ENCODE measurements at regions of chrX and their contacts with region 1.

Region 1: DNA sequence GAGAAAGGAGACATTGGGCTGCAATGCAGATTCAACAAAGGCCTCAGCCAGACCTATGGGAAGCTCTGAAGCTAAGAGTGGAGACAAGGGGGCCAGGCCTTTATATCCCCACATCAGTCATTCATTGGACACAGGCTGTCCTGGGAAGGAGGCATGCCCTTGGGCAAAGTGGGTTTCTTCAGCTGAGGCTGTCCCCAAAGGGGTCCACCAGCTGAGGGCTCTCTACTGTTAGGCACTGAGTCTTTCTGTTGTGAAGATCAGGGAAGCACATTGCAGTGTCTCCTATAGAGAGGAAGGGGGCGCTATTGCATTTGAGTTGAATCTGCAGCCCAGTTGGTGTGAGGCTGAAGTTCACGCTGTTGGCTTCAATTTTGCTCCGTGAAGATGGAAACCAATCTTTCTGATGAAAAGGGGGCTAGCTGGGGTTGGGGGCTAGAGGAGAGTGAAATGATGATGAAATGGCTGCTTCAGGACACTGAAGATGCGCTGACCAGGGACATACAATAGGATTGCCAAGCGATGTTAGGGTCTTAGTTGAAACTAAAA is 48.0 kb downstream of the SLC25A5 start:
- DNase-seq: peak; percentile 25
- H3K4me3 Mint-ChIP-seq: no peak overlapping the region
- H3K27ac Mint-ChIP-seq: peak overlapping the region; percentile 2
- H3K4me1 Mint-ChIP-seq: peaks cover 8% of the 10 kb centered on the region
- H3K27me3 Mint-ChIP-seq: peaks cover 2% of the 10 kb centered on the region

Region 2: DNA sequence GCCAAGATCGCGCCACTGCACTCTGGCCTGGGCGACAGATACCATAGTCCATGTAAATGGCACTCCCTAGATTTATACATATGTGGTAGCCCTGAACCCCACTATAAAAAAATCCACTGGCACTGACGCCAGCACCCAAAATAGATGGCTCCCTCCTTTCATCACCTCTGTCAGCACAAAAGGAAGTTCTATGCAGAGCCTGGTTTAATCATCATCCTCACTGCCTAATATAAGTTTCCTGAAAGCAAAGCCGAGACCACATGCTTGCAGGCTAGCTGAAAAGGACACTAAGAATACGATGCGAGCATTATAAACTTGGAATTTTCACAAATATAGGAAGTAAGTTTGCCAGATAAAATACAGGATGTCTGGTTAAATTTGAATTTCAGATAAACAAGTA is 1048.1 kb before region 1 on chrX:
- intact Hi-C with region 1: no loop called
- DNase-seq: no peak
- H3K4me3 Mint-ChIP-seq: no peak overlapping the region
- H3K27ac Mint-ChIP-seq: no peak overlapping the region
- H3K4me1 Mint-ChIP-seq: no peaks in the 10 kb centered on the region
- H3K27me3 Mint-ChIP-seq: peaks cover 1% of the 10 kb centered on the region

Region 3: DNA sequence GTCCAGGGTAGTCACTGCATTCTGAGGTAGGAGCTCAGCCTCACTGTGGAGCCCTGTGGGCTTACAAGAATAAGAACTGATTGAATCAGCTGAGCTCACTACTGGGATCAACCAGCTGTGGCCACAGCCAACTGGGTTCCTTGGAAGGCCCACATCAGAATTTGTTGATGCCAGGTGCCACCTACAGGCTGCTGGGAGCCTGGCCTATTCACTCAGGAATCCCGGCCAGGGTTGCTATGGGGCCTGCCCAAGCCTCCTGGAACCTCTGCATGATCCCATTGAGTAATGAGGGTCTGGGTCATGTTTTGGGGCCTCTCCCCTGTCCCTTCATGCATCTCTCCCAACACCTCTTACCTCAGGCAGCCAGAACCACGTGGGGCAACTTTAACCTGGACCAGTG is 334.7 kb before region 1 on chrX:
- intact Hi-C with region 1: no loop called
- DNase-seq: no peak
- H3K4me3 Mint-ChIP-seq: no peak overlapping the region
- H3K27ac Mint-ChIP-seq: no peak overlapping the region
- H3K4me1 Mint-ChIP-seq: no peaks in the 10 kb centered on the region
- H3K27me3 Mint-ChIP-seq: peaks cover 2% of the 10 kb centered on the region

Region 4: GRCh38 chrX:119273420-119274192 is 242.6 kb before region 1 on chrX:
- intact Hi-C with region 1: no loop called
- DNase-seq: peak; percentile 36
- H3K4me3 Mint-ChIP-seq: peak overlapping the region; percentile 59
- H3K27ac Mint-ChIP-seq: no peak overlapping the region
- H3K4me1 Mint-ChIP-seq: peaks cover 8% of the 10 kb centered on the region
- H3K27me3 Mint-ChIP-seq: peaks cover 16% of the 10 kb centered on the region

Region 5: DNA sequence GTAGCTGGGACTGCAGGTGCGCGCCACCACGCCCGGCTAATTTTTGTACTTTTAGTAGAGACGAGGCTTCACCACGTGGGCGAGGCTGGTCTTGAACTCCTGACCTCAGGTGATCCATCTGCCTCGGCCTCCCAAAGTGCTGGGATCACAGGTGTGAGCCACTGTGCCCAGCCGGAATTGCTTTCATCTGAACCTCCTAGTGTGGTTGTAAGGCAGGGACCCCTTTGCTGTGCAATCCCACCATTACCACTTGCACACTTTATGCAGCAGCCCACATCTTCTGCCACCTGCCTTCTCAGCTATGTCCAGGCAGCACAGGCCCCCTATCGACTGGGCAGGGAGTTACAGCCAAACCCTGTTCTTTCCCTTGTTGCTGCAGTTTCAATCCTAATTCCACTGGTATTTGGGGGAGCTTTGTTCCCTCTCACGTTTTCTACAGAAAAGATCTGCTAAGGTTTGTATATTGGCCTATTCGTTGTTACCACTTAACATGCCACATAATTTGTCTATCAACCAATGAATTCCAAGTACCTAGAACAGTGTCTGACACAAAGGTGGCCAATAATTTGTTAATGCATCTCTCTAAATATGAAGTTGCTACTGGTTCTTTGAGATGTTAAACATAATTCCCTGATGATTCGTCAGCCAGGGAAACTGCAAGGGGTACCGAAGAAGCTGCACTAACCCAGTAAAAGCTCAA is 268.7 kb after region 1 on chrX:
- intact Hi-C with region 1: loop called (anchors 1 kb)
- DNase-seq: peak; percentile 17
- H3K4me3 Mint-ChIP-seq: no peak overlapping the region
- H3K27ac Mint-ChIP-seq: no peak overlapping the region
- H3K4me1 Mint-ChIP-seq: peaks cover 17% of the 10 kb centered on the region
- H3K27me3 Mint-ChIP-seq: no peaks in the 10 kb centered on the region

Region 6: DNA sequence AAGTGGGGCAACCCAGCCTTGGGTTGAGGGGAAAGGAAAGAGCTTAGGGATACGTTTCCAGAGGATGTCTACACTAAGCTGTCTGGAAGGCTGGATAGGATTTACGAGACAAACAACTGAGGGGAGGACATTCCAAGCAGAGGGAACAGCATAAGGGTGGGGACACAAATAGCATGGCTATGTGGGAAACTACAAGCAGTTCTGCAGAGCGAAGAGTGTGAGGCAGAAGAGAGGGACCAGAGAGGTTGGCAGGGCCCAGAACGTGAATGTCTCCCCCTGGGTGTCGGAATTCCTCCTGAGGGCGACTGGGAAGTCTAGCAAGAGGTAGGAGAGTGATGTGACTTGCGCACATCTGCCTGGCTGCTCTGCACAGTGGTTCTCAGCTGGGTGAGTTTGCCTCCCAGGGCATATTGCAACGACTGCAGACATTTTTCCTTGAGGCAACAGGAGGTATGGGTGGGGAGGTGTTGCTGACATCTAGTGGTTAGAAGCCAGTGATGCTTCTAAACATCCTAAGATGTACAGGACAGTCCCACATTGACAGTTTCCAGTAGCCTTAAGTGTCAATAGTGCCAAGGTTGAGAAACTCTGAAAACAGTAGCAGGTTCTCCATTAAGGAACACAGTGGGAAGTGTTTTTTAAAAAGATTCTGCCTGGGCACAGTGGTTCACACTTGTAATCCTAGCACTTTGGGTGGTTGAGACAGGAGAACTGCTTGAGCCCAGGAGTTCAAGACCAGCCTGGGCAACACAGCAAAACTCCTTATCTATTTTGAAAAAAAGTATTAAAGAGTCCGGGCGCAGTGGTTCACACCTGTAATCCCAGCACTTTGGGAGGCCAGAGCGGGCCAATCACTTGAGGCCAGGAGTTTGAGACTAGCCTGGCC is 364.6 kb after region 1 on chrX:
- intact Hi-C with region 1: loop called (anchors 2 kb)
- DNase-seq: no peak
- H3K4me3 Mint-ChIP-seq: no peak overlapping the region
- H3K27ac Mint-ChIP-seq: peak overlapping the region; percentile 79
- H3K4me1 Mint-ChIP-seq: peaks cover 12% of the 10 kb centered on the region
- H3K27me3 Mint-ChIP-seq: no peaks in the 10 kb centered on the region

Measured in activated T-helper 1 cell treated with anti-CD3 and anti-CD28 coated beads, Interleukin-12 subunit alpha, Interleukin-12 subunit beta, Interleukin-2, Interleukin-4 antibody, amounts not matched to agents 30 ng/mL and 10 ng/mL and 1 ng/mL, durations not matched to agents 14 hours and 24 hours and 36 hours (primary cell).